Heart left ventricle (tissue), 16 donors: ENCODE measurements at regions of chr15 and their contacts with region 1.

Region 1: GRCh38 chr15:99565299-99566156 is at the start of gene MEF2A:
- DNase-seq: peak; percentile 96 to 98 (median 97)
- ATAC-seq: peak; percentile 79 to 85 (median 84)
- H3K4me3 ChIP-seq: peak within 1 kb of the TSS; percentile 73 to 97 (median 86)
- H3K27ac ChIP-seq: peak within 1 kb of the TSS; percentile 97 to 100 (median 99)
- H3K4me1 ChIP-seq: peaks cover 6 to 57% (median 35%) of the 10 kb centered on the region in 12 donors
- H3K27me3 ChIP-seq: no peaks in the 10 kb centered on the region
- CTCF ChIP-seq: no peak
- POLR2A ChIP-seq: peak in 1 of 2 donors; percentile 67
- total RNA-seq, gene MEF2A: 131 to 192 (median 160) TPM

Region 2: DNA sequence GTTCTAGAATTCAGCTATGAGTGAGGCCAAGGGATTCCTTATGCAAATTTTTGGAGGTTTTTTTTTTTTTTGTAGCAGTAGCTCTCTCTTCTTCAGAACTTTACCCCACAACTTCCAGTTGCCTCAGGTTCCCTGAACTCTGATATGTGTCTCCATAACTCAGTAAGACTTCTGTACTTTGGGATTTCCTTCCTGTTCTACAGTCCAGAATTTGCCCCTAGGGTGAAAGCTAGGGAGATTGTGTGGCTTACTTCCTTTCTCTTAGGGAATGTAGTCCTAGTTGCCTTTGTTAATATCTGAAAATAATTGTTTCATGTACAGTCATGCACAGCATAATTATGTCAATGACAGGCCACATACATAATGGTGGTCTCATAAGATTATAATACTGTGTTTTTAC is 283.4 kb before region 1 on chr15:
- intact Hi-C with region 1: loop called in 1 of 10 experiments (anchors 5 kb)
- DNase-seq: no peak
- ATAC-seq: peak in 1 of 4 donors; percentile 41
- H3K4me3 ChIP-seq: no peak overlapping the region
- H3K27ac ChIP-seq: peak overlapping the region in 4 of 12 donors; percentile 5 to 30 (median 19)
- H3K4me1 ChIP-seq: peaks cover 0 to 25% (median 6%) of the 10 kb centered on the region in 12 donors
- H3K27me3 ChIP-seq: no peaks in the 10 kb centered on the region
- CTCF ChIP-seq: no peak
- POLR2A ChIP-seq: no peak

Region 3: GRCh38 chr15:99409097-99409473 is 156.4 kb before region 1 on chr15:
- intact Hi-C with region 1: loop called in 7 of 10 experiments (anchors 2 to 10 kb)
- DNase-seq: peak; percentile 71 to 82 (median 79)
- ATAC-seq: peak; percentile 87 to 94 (median 88)
- H3K4me3 ChIP-seq: no peak overlapping the region
- H3K27ac ChIP-seq: peak overlapping the region in 10 of 12 donors; percentile 6 to 71 (median 42)
- H3K4me1 ChIP-seq: peaks cover 0 to 26% (median 22%) of the 10 kb centered on the region in 12 donors
- H3K27me3 ChIP-seq: no peaks in the 10 kb centered on the region
- CTCF ChIP-seq: peak; percentile 51 to 74 (median 66)
- POLR2A ChIP-seq: no peak

Region 4: GRCh38 chr15:99442252-99442897 is 123.2 kb before region 1 on chr15:
- intact Hi-C with region 1: loop called in 1 of 10 experiments (anchors 10 kb)
- DNase-seq: peak; percentile 80 to 89 (median 83)
- ATAC-seq: peak; percentile 88 to 94 (median 92)
- H3K4me3 ChIP-seq: peak overlapping the region in 2 of 12 donors; percentile 17 to 19
- H3K27ac ChIP-seq: peak overlapping the region; percentile 70 to 89 (median 82)
- H3K4me1 ChIP-seq: peaks cover 5 to 64% (median 47%) of the 10 kb centered on the region in 12 donors
- H3K27me3 ChIP-seq: no peaks in the 10 kb centered on the region
- CTCF ChIP-seq: no peak
- POLR2A ChIP-seq: peak in 1 of 2 donors; percentile 19

Region 5: GRCh38 chr15:99507504-99508310 is 57.8 kb before region 1 on chr15:
- intact Hi-C with region 1: loop called (anchors 2 to 10 kb)
- DNase-seq: peak; percentile 78 to 87 (median 81)
- ATAC-seq: peak; percentile 86 to 91 (median 88)
- H3K4me3 ChIP-seq: peak overlapping the region in 5 of 12 donors; percentile 2 to 20 (median 13)
- H3K27ac ChIP-seq: peak overlapping the region; percentile 19 to 91 (median 80)
- H3K4me1 ChIP-seq: peaks cover 3 to 94% (median 45%) of the 10 kb centered on the region in 12 donors
- H3K27me3 ChIP-seq: no peaks in the 10 kb centered on the region
- CTCF ChIP-seq: no peak
- POLR2A ChIP-seq: no peak

Region 6: GRCh38 chr15:99704444-99704838 is 138.9 kb after region 1 on chr15:
- intact Hi-C with region 1: loop called in 9 of 10 experiments (anchors 1 to 5 kb)
- DNase-seq: peak in 2 of 5 donors; percentile 39 to 57
- ATAC-seq: peak; percentile 71 to 79 (median 76)
- H3K4me3 ChIP-seq: peak overlapping the region in 1 of 12 donors; percentile 8
- H3K27ac ChIP-seq: peak overlapping the region; percentile 21 to 87 (median 80)
- H3K4me1 ChIP-seq: peaks cover 3 to 69% (median 45%) of the 10 kb centered on the region in 12 donors
- H3K27me3 ChIP-seq: no peaks in the 10 kb centered on the region
- CTCF ChIP-seq: peak; percentile 66 to 85 (median 80)
- POLR2A ChIP-seq: no peak